Activated CD8-positive, alpha-beta T cell treated with anti-CD3 and anti-CD28 coated beads, Interleukin-2, amount 10 ng/mL, durations not matched to agents 7 days and 5 days (primary cell): ENCODE measurements at regions of chr16 and their contacts with region 1.

Region 1: DNA sequence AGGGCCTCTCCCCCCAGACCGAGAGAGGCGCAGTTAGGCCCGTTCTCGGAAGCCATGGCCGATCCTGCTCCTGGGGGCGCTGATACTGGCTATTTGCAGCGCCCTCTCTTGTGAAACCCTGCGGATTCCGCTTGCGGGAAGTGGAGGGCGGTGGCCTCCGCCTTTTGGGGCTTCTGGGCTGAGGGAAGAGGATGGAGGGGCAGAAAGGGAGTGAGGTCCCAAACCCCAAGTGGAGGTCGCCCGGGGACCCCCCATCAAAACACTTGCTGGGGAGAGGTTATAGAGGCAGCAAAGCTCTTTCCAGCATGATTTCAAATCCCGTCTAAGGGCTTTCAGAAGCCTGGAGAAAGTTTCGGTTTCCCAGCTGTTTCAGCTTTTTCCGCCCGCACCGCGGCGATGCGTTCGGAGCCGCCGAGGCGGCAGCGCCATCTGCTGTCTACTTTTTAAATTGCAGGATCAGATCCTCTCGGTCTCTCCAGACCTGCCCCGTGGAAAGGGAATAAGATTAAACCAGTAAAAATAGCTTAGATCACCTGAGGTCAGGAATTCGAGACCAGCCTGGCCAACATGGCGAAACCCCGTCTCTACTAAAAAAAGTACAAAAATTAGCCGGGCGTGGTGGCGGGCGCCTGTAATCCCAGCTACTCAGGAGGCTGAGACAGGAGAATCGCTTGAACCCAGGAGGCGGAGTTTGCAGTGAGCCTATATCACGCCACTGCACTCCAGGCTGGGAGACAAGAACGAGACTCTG is 15.8 kb downstream of the SNX20 start:
- DNase-seq: peak; percentile 91
- ATAC-seq: peak; percentile 56
- H3K4me3 Mint-ChIP-seq: peak overlapping the region; percentile 64
- H3K27ac Mint-ChIP-seq: peak overlapping the region; percentile 87
- H3K4me1 Mint-ChIP-seq: peaks cover 49% of the 10 kb centered on the region
- H3K27me3 Mint-ChIP-seq: no peaks in the 10 kb centered on the region

Region 2: GRCh38 chr16:50024684-50025536 is 640.4 kb before region 1 on chr16 and contains the start of gene CNEP1R1:
- CTCF ChIA-PET with region 1: interaction called, 16 read pairs
- POLR2A ChIA-PET with region 1: interaction called, 3 read pairs
- DNase-seq: peak; percentile 95
- ATAC-seq: peak; percentile 99
- H3K4me3 Mint-ChIP-seq: peak within 1 kb of the TSS; percentile 94
- H3K27ac Mint-ChIP-seq: peak within 1 kb of the TSS; percentile 92
- H3K4me1 Mint-ChIP-seq: peaks cover 14% of the 10 kb centered on the region
- H3K27me3 Mint-ChIP-seq: peaks cover 4% of the 10 kb centered on the region
- total RNA-seq, gene CNEP1R1: 25.1 to 26.9 TPM

Region 3: DNA sequence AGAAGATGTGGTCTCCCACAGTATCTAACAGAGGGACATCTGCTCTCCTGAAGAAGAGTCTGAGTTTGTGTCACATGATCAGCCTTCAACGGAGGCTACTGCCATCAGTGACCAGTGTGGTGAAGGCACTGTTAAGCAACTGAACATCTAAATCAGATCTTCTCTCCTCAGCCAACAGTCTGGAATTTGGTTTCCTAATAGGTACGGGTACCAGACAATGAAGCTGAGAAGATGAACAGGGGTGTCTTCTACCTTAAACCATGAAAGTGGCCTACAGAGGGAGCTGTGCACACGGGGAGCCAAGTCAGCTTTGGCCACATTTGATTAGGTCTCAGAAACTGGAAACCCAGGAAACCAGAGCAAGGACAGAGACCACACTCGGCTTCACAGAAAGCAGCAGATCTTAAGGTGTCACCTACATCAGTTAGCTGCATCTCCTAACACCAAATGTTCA is 338.3 kb before region 1 on chr16:
- CTCF ChIA-PET with region 1: interaction called, 123 read pairs
- POLR2A ChIA-PET with region 1: interaction called, 3 read pairs
- DNase-seq: peak; percentile 88
- ATAC-seq: peak; percentile 96
- H3K4me3 Mint-ChIP-seq: no peak overlapping the region
- H3K27ac Mint-ChIP-seq: peak overlapping the region; percentile 78
- H3K4me1 Mint-ChIP-seq: peaks cover 62% of the 10 kb centered on the region
- H3K27me3 Mint-ChIP-seq: no peaks in the 10 kb centered on the region

Region 4: DNA sequence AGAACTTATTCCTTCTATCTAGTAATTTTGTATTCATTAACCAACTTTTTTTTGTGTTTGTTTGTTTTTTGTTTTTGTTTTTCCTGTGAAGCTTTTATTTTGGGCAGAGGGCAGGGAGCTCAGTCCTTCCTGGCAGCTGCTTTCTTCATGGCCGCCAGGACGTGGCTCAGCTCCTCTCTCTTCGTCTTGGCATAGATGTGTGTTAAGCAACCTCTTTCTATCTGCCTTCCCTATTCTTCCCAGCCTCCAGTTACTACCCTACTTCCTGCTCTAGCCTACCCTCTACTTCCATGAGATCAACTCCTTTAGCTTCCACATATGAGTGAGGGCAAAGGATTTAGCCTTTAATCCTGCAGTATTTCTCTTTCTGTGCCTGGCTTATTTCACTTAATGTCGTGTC is 288.3 kb before region 1 on chr16:
- CTCF ChIA-PET with region 1: interaction called, 44 read pairs
- POLR2A ChIA-PET with region 1: no interaction called
- DNase-seq: no peak
- ATAC-seq: no peak
- H3K4me3 Mint-ChIP-seq: no peak overlapping the region
- H3K27ac Mint-ChIP-seq: no peak overlapping the region
- H3K4me1 Mint-ChIP-seq: no peaks in the 10 kb centered on the region
- H3K27me3 Mint-ChIP-seq: peaks cover 4% of the 10 kb centered on the region

Region 5: GRCh38 chr16:50653633-50654519 is 11.4 kb before region 1 on chr16:
- CTCF ChIA-PET with region 1: interaction called, 40 read pairs
- POLR2A ChIA-PET with region 1: interaction called, 7 read pairs
- DNase-seq: no peak
- ATAC-seq: no peak
- H3K4me3 Mint-ChIP-seq: no peak overlapping the region
- H3K27ac Mint-ChIP-seq: no peak overlapping the region
- H3K4me1 Mint-ChIP-seq: no peaks in the 10 kb centered on the region
- H3K27me3 Mint-ChIP-seq: no peaks in the 10 kb centered on the region

Region 6: DNA sequence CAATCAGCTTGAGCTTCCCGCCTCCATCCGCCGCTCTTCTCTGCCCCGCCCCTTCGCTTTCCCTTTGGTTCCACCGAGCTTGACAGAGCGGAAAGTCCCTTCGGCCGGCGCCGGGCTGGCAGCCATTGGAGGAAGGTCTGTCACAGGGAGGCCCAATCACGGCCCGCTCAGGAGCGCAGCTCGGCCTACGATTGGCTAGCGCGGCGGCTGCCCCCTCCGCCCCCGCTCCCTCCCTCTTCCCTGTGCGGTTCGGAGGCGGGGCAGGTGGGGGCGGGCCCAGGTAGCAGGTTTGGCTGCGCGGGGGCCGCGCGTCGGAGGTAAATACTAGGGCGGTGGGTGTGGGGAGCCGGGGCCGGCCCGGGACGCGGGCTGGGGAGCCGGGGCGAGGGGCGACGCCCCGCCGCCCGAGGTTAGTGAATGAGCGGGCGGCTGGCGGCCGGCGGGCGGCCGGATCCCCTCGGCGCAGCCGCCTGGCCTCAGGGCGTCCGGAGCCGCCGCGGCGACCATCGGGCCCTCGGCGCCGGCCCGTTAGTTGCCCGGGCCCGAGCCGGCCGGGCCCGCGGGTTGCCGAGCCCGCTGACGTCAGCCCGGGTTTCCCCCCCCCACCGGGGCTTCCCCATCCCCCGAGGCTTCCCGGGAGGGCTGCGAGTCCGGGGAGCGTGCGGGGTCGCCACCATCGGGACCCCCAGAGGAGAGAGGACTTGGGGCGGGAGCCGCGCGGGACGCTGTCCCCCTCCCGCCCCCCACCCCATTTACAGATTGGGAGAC is 76.7 kb after region 1 on chr16 and contains the start of gene CYLD:
- CTCF ChIA-PET with region 1: interaction called, 567 read pairs
- POLR2A ChIA-PET with region 1: interaction called, 58 read pairs
- DNase-seq: peak; percentile 100
- ATAC-seq: peak; percentile 97
- H3K4me3 Mint-ChIP-seq: peak within 1 kb of the TSS; percentile 91
- H3K27ac Mint-ChIP-seq: peak within 1 kb of the TSS; percentile 97
- H3K4me1 Mint-ChIP-seq: peaks cover 42% of the 10 kb centered on the region
- H3K27me3 Mint-ChIP-seq: no peaks in the 10 kb centered on the region
- total RNA-seq, gene CYLD: 116 to 129 TPM